Naive thymus-derived CD4-positive, alpha-beta T cell (primary cell): ENCODE measurements at regions of chr2 and their contacts with region 1.

Region 1: DNA sequence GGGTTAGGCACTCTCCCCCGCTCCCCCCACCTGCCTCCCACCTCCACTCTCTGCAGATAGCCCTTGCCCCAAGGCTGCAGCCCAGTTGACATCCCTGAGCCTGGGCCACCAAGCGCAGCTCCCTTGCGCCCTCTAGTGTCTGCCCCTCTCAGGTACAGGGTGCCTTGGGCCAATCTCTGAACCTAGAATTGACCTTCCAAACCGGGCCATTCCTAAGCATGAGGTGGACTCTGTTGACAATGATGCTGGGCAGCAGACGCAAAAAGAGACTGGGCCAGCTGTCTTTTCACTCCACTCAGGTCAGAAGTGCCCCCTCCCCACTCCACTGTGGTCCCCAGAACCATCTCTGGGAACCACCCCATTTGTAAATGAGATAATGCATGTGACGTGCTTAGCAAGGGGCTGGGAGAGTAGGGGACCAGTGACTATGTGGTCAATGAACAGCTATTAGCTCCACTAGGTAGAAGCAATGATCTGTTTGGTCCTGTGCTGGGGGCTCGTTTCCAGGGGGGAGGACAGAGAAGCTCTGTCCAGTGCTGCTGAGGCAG is 43.3 kb upstream of the PLB1 start:
- DNase-seq: peak; percentile 42 to 86 (median 65)
- ATAC-seq: peak; percentile 79
- H3K4me3 ChIP-seq: no peak overlapping the region
- H3K4me3 Mint-ChIP-seq: no peak overlapping the region
- H3K27ac ChIP-seq: no peak overlapping the region
- H3K27ac Mint-ChIP-seq: no peak overlapping the region
- H3K4me1 ChIP-seq: no peaks in the 10 kb centered on the region
- H3K4me1 Mint-ChIP-seq: peaks cover 0 to 44% (median 0%) of the 10 kb centered on the region in 7 donors
- H3K27me3 ChIP-seq: no peaks in the 10 kb centered on the region
- H3K27me3 Mint-ChIP-seq: no peaks in the 10 kb centered on the region

Region 2: GRCh38 chr2:27703638-27704341 is 748.8 kb before region 1 on chr2:
- CTCF ChIA-PET with region 1: interaction called, 5 read pairs
- POLR2A ChIA-PET with region 1: no interaction called
- intact Hi-C with region 1: loop called in 1 of 2 experiments (anchors 1 kb)
- DNase-seq: peak; percentile 59 to 83 (median 77)
- ATAC-seq: peak; percentile 94
- H3K4me3 ChIP-seq: no peak overlapping the region
- H3K4me3 Mint-ChIP-seq: no peak overlapping the region
- H3K27ac ChIP-seq: no peak overlapping the region
- H3K27ac Mint-ChIP-seq: peak overlapping the region in 1 of 9 donors; percentile 36
- H3K4me1 ChIP-seq: no peaks in the 10 kb centered on the region
- H3K4me1 Mint-ChIP-seq: peaks cover 0 to 16% (median 4%) of the 10 kb centered on the region in 7 donors
- H3K27me3 ChIP-seq: no peaks in the 10 kb centered on the region
- H3K27me3 Mint-ChIP-seq: no peaks in the 10 kb centered on the region

Region 3: GRCh38 chr2:27754138-27754588 is 698.4 kb before region 1 on chr2:
- CTCF ChIA-PET with region 1: interaction called, 3 read pairs
- POLR2A ChIA-PET with region 1: no interaction called
- intact Hi-C with region 1: loop called (anchors 1 kb)
- DNase-seq: peak in 8 of 9 donors; percentile 8 to 79 (median 28)
- ATAC-seq: peak; percentile 89
- H3K4me3 ChIP-seq: no peak overlapping the region
- H3K4me3 Mint-ChIP-seq: no peak overlapping the region
- H3K27ac ChIP-seq: no peak overlapping the region
- H3K27ac Mint-ChIP-seq: no peak overlapping the region
- H3K4me1 ChIP-seq: no peaks in the 10 kb centered on the region
- H3K4me1 Mint-ChIP-seq: peaks cover 0 to 10% (median 0%) of the 10 kb centered on the region in 7 donors
- H3K27me3 ChIP-seq: no peaks in the 10 kb centered on the region
- H3K27me3 Mint-ChIP-seq: peaks cover 0 to 10% (median 5%) of the 10 kb centered on the region in 5 donors

Region 4: DNA sequence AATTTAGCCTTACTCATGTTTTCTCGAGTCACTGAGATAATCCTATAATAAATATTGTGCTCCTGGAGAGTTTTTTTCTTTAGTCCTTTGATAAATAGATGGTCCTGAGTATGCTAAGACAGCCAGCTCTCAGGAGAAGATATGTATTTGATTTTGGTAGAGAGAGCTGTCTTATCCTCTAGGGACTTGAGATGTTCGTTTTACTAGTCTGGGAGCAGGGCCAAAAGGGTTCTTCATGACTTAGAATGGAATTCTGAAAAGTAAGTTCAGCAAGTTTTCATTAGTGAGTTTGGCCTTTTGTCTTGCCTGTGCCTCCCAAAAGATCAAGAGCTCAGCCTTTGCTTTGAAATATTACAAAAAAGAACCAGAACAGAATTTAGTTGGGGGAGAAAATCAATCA is 315.4 kb before region 1 on chr2:
- CTCF ChIA-PET with region 1: no interaction called
- POLR2A ChIA-PET with region 1: no interaction called
- intact Hi-C with region 1: loop called in 1 of 2 experiments (anchors 5 kb)
- DNase-seq: no peak
- ATAC-seq: no peak
- H3K4me3 ChIP-seq: no peak overlapping the region
- H3K4me3 Mint-ChIP-seq: no peak overlapping the region
- H3K27ac ChIP-seq: no peak overlapping the region
- H3K27ac Mint-ChIP-seq: no peak overlapping the region
- H3K4me1 ChIP-seq: peaks cover 16% of the 10 kb centered on the region in 2 donors
- H3K4me1 Mint-ChIP-seq: peaks cover 23 to 42% (median 30%) of the 10 kb centered on the region in 7 donors
- H3K27me3 ChIP-seq: no peaks in the 10 kb centered on the region
- H3K27me3 Mint-ChIP-seq: no peaks in the 10 kb centered on the region

Region 5: GRCh38 chr2:28359222-28360065 is 93.2 kb before region 1 on chr2:
- CTCF ChIA-PET with region 1: no interaction called
- POLR2A ChIA-PET with region 1: no interaction called
- intact Hi-C with region 1: loop called in 1 of 2 experiments (anchors 1 kb)
- DNase-seq: peak; percentile 58 to 87 (median 82)
- ATAC-seq: peak; percentile 86
- H3K4me3 ChIP-seq: peak overlapping the region; percentile 42
- H3K4me3 Mint-ChIP-seq: peak overlapping the region; percentile 76 to 95 (median 84)
- H3K27ac ChIP-seq: peak overlapping the region; percentile 5
- H3K27ac Mint-ChIP-seq: peak overlapping the region; percentile 34 to 96 (median 93)
- H3K4me1 ChIP-seq: peaks cover 36 to 43% of the 10 kb centered on the region in 2 donors
- H3K4me1 Mint-ChIP-seq: peaks cover 34 to 68% (median 38%) of the 10 kb centered on the region in 7 donors
- H3K27me3 ChIP-seq: no peaks in the 10 kb centered on the region
- H3K27me3 Mint-ChIP-seq: peaks cover 0 to 14% (median 0%) of the 10 kb centered on the region in 5 donors

Region 6: DNA sequence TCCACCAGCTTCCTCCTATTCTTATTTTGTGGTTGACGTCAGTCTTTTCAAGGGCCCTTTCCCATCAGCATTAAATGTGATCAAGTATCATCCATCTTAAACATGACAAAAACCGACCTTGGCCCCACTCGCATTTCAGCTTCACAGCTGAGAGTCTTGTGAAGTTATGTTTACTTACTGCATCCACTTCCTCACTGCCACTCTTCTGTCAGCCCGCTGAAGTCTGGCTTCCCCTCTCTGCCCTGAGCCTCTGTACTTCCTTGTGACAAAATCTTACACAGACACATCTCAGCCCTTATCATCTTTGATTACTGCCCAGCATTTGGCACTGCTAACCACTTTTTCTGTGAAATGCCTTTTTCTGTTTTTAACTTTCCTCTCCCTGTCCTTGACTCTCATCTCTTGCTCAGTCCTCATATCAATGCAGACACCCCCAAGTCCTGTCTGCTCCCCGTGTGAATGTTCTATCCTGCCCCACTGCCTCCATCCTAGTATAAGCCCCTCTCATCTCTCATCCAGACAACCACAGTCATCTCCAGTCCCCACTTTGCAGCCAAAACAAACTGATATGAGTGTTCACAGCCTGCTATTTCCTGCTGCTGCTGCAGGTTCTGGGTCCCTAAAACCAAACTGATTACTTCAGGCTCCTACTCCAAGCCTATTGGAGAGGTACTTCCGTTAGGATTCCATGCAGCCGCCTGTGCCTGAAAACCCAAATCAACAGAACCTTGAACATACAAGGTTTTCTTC is 28.6 kb before region 1 on chr2:
- CTCF ChIA-PET with region 1: interaction called, 3 read pairs
- POLR2A ChIA-PET with region 1: no interaction called
- intact Hi-C with region 1: loop called in 1 of 2 experiments (anchors 2 kb)
- DNase-seq: peak in 7 of 9 donors; percentile 33 to 70 (median 57)
- ATAC-seq: peak; percentile 90
- H3K4me3 ChIP-seq: peak overlapping the region; percentile 21
- H3K4me3 Mint-ChIP-seq: peak overlapping the region; percentile 62 to 84 (median 74)
- H3K27ac ChIP-seq: peak overlapping the region; percentile 66
- H3K27ac Mint-ChIP-seq: peak overlapping the region; percentile 88 to 99 (median 97)
- H3K4me1 ChIP-seq: peaks cover 24 to 30% of the 10 kb centered on the region in 2 donors
- H3K4me1 Mint-ChIP-seq: peaks cover 33 to 53% (median 45%) of the 10 kb centered on the region in 7 donors
- H3K27me3 ChIP-seq: no peaks in the 10 kb centered on the region
- H3K27me3 Mint-ChIP-seq: no peaks in the 10 kb centered on the region

Region 7: DNA sequence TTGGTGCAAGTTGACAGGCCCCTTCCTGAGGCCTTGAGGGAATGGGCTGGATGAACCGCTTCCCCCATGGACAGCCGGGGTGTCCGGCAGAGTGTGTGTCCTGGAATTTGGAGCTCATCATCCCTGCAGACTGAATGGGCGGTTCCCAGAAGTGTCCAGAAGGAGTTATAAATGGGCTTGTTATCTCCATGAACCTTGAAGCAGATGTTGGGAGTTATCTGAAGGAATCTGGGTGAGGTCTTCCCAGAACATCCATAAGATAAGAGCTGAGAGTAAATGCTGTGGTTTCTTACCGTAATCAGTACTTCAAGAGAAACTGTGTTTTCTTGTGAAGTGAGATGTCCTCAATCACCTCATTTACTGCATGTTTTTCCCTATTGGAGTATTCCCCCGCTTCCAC is 64.3 kb after region 1 on chr2:
- CTCF ChIA-PET with region 1: no interaction called
- POLR2A ChIA-PET with region 1: no interaction called
- intact Hi-C with region 1: no loop called
- DNase-seq: no peak
- ATAC-seq: no peak
- H3K4me3 ChIP-seq: no peak overlapping the region
- H3K4me3 Mint-ChIP-seq: no peak overlapping the region
- H3K27ac ChIP-seq: no peak overlapping the region
- H3K27ac Mint-ChIP-seq: no peak overlapping the region
- H3K4me1 ChIP-seq: no peaks in the 10 kb centered on the region
- H3K4me1 Mint-ChIP-seq: no peaks in the 10 kb centered on the region
- H3K27me3 ChIP-seq: peaks cover 0 to 4% of the 10 kb centered on the region in 2 donors
- H3K27me3 Mint-ChIP-seq: peaks cover 35 to 66% (median 43%) of the 10 kb centered on the region in 5 donors

Region 8: GRCh38 chr2:28594289-28595108 is 141.9 kb after region 1 on chr2:
- CTCF ChIA-PET with region 1: no interaction called
- POLR2A ChIA-PET with region 1: no interaction called
- intact Hi-C with region 1: no loop called
- DNase-seq: peak; percentile 72 to 86 (median 79)
- ATAC-seq: peak; percentile 93
- H3K4me3 ChIP-seq: peak overlapping the region; percentile 33
- H3K4me3 Mint-ChIP-seq: peak overlapping the region; percentile 60 to 83 (median 69)
- H3K27ac ChIP-seq: peak overlapping the region; percentile 71
- H3K27ac Mint-ChIP-seq: peak overlapping the region; percentile 76 to 98 (median 94)
- H3K4me1 ChIP-seq: peaks cover 9 to 15% of the 10 kb centered on the region in 2 donors
- H3K4me1 Mint-ChIP-seq: peaks cover 12 to 25% (median 19%) of the 10 kb centered on the region in 7 donors
- H3K27me3 ChIP-seq: no peaks in the 10 kb centered on the region
- H3K27me3 Mint-ChIP-seq: no peaks in the 10 kb centered on the region